Mammary epithelial cell (primary cell): ENCODE measurements at regions of chr7 and their contacts with region 1.

Region 1: DNA sequence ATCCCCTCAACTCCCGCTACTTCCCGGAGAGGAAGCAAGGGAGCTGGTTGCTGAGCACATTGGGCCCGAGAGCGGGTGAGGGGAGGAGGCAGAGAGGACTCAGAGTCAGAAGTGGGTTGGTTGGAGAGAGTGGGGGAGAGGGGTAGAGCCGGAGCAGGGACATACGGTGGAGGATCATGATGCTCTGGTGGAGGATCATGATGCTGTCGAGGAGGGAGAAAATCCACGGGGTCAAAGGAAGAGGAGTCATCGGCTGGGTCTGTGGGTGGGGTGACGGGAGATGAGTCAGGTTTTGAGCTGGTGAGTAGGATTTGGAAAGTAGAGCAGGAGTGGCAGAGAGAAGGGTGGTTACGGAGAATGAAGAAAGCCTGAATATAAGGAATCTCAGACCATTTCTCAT is 23.5 kb downstream of the SCIN start:
- DNase-seq: no peak
- H3K4me3 ChIP-seq: no peak overlapping the region
- H3K27ac ChIP-seq: no peak overlapping the region
- H3K4me1 ChIP-seq: no peaks in the 10 kb centered on the region
- H3K27me3 ChIP-seq: peaks cover 2% of the 10 kb centered on the region
- CTCF ChIP-seq: no peak

Region 2: GRCh38 chr7:12540850-12541249 is 53.2 kb before region 1 on chr7:
- CTCF ChIA-PET with region 1: no interaction called
- dilution Hi-C with region 1: loop called (anchors 5 kb)
- in situ Hi-C with region 1: no loop called
- intact Hi-C with region 1: no loop called
- DNase-seq: no peak
- H3K4me3 ChIP-seq: no peak overlapping the region
- H3K27ac ChIP-seq: no peak overlapping the region
- H3K4me1 ChIP-seq: peaks cover 3% of the 10 kb centered on the region
- H3K27me3 ChIP-seq: no peaks in the 10 kb centered on the region
- CTCF ChIP-seq: no peak

Region 3: GRCh38 chr7:12638851-12639467 is 44.9 kb after region 1 on chr7:
- CTCF ChIA-PET with region 1: no interaction called
- dilution Hi-C with region 1: no loop called
- in situ Hi-C with region 1: no loop called
- intact Hi-C with region 1: no loop called
- DNase-seq: peak; percentile 32
- H3K4me3 ChIP-seq: no peak overlapping the region
- H3K27ac ChIP-seq: no peak overlapping the region
- H3K4me1 ChIP-seq: no peaks in the 10 kb centered on the region
- H3K27me3 ChIP-seq: no peaks in the 10 kb centered on the region
- CTCF ChIP-seq: peak; percentile 56 to 61